ENCODE measurements at regions of chr18 and their contacts with region 1.

Region 1: GRCh38 chr18:63131106-63131958 is 188.2 kb downstream of the BCL2 start:
- DNase-seq: no peak

Region 2: GRCh38 chr18:63249771-63250170 is 118.4 kb after region 1 on chr18:
- intact Hi-C with region 1: loop called in 1 of 2 experiments (anchors 10 kb)
- DNase-seq: no peak

Region 3: GRCh38 chr18:63320046-63320689 is 188.8 kb after region 1 on chr18:
- intact Hi-C with region 1: loop called (anchors 2 to 5 kb)
- DNase-seq: peak; percentile 94